ENCODE measurements at regions of chr19 and their contacts with region 1.

Region 1: DNA sequence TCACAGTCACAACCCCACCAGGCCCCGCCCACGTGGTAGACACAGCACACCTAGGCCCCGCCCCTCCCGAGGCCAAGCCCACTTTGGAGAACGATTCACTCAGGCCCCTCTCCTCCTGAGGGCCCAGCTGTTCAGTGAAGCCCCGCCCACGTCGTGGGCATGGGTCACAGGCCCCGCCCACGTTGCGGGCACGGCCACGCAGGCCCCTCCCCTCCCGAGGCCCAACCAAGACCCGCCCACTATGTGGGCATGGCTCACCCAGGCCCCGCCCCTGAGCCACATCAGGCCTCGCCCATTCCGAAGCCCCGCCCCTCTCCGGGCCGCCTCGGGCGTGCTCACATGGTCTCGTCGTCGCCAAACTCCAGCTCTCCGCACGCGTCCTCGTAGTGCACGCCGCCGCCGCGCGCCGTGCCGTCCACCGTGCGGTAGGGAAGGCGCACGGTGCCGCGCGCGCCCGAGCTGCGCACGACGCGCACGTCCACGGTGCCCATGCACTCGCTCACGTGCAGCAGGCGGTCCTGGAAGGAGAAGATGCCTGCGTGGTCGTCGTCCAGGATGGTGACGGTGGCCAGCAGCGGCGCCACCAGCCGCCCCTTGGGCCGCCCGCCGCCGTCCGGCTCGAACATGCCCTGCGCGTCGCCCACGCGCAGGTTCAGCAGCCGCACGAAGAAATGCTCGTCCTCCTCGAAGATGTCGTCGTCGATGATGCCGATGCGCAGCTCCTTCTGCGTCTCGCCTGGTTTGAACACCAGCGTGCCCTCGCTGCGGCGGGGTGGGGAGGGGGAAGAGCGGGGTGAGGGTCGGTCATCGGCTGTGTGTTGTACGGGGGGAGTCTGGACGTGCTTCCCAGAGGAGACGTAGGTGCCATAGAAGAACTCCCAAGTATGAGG is 24.0 kb downstream of the SLC8A2 start:
- DNase-seq: no peak
- ATAC-seq: peak; percentile 41

Region 2: GRCh38 chr19:47499863-47500830 is 52.4 kb after region 1 on chr19:
- intact Hi-C with region 1: loop called (anchors 5 kb)
- DNase-seq: no peak
- ATAC-seq: no peak

Region 3: DNA sequence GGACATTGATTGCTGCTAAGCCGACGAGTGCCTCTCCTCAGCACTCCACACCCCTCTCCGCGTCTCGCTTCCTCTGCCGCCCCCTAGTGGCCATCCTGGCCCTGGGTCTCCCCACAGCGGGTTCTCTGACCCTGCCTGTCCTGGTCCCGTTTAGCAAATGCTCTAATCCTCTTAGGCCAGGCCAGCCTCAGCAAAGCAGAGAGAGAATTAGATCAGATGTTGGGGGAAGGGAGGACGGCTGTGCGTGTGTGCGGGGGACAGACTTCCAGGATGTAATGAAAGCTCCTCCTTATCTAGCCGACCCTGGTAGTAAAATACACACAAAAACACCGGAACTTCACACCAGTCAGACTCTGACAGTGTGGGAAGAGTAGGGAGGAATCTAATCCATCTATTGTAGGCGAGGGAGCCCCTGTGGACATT is 415.8 kb after region 1 on chr19:
- intact Hi-C with region 1: no loop called
- DNase-seq: peak; percentile 89
- ATAC-seq: peak; percentile 99